Left cardiac atrium (tissue), 4 donors: ENCODE measurements at regions of chr9 and their contacts with region 1.

Region 1: GRCh38 chr9:104027295-104027694 is 66.8 kb upstream of the SMC2 start:
- DNase-seq: no peak
- ATAC-seq: no peak

Region 2: GRCh38 chr9:104386425-104387069 is 359.3 kb after region 1 on chr9:
- intact Hi-C with region 1: loop called in 1 of 2 experiments (anchors 5 kb)
- DNase-seq: no peak
- ATAC-seq: peak in 1 of 2 donors; percentile 49